ENCODE measurements at regions of chr2 and their contacts with region 1.

Region 1: DNA sequence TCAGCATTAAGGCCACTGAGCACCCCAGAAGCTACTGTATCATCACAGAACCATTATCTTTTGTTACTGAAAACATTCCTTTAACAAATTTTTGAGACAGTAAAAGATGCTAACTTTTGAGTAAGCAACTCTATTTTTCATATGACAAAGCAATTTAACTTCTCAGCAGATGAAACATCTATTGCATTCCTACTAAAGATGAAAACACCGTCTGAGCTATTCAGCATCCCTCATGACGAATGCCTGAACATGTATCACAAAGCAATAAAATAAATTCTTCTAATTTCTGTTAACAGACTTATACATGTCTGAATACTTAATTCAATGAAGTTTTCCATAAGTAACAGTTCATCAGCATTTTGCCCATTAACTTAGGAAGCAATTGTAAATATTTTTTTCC is 23.9 kb downstream of the CHN1 start:
- DNase-seq: no peak
- H3K4me3 ChIP-seq: no peak overlapping the region
- CTCF ChIP-seq: no peak

Region 2: GRCh38 chr2:174771631-174772471 is 209.5 kb before region 1 on chr2:
- in situ Hi-C with region 1: loop called (anchors 5 kb)
- DNase-seq: peak; percentile 63
- H3K4me3 ChIP-seq: no peak overlapping the region
- CTCF ChIP-seq: peak; percentile 91